ENCODE measurements at regions of chr9 and their contacts with region 1.

Region 1: DNA sequence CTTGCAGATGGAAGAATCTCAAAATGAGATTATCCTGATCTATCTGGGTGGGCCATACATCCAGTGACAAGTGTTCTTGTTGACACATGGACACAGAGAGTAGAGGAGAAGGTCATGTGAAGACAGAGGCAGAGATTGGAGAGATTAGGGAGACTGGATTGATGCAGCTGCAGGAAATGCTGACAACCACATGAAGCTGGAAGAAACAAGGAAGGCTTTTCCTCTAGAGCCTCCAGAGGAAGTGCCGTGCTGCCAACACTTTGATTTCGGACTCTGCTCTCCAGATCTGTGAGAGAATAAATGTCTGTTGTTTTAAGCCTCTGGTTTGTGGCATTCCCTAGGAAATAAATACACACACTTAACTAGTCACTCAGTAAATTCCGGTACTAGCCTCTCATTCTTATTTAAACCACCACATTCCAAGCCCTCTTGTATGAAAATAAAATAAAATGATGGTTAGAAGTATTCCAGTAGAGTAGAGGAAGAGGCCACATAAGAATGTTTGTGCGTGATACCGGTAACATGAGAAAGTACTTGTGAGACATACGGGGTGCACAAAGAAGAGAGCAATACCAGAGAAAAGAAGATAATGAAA is 110.9 kb upstream of the DMAC1 start:
- DNase-seq: no peak
- ATAC-seq: no peak
- H3K4me3 ChIP-seq: no peak overlapping the region
- H3K4me3 Mint-ChIP-seq: no peak overlapping the region
- H3K27ac ChIP-seq: no peak overlapping the region
- H3K27ac Mint-ChIP-seq: peak overlapping the region in 1 of 9 donors; percentile 9
- H3K4me1 ChIP-seq: peaks cover 0 to 4% of the 10 kb centered on the region in 2 donors
- H3K4me1 Mint-ChIP-seq: peaks cover 0 to 14% (median 10%) of the 10 kb centered on the region in 7 donors
- H3K27me3 ChIP-seq: no peaks in the 10 kb centered on the region
- H3K27me3 Mint-ChIP-seq: peaks cover 0 to 5% (median 0%) of the 10 kb centered on the region in 5 donors

Region 2: GRCh38 chr9:7844242-7844641 is 66.3 kb before region 1 on chr9:
- CTCF ChIA-PET with region 1: no interaction called
- POLR2A ChIA-PET with region 1: no interaction called
- intact Hi-C with region 1: no loop called
- DNase-seq: peak in 6 of 9 donors; percentile 2 to 44 (median 24)
- ATAC-seq: peak; percentile 73
- H3K4me3 ChIP-seq: no peak overlapping the region
- H3K4me3 Mint-ChIP-seq: peak overlapping the region in 1 of 10 donors; percentile 6
- H3K27ac ChIP-seq: no peak overlapping the region
- H3K27ac Mint-ChIP-seq: no peak overlapping the region
- H3K4me1 ChIP-seq: no peaks in the 10 kb centered on the region
- H3K4me1 Mint-ChIP-seq: peaks cover 0 to 3% (median 0%) of the 10 kb centered on the region in 7 donors
- H3K27me3 ChIP-seq: no peaks in the 10 kb centered on the region
- H3K27me3 Mint-ChIP-seq: peaks cover 0 to 4% (median 0%) of the 10 kb centered on the region in 5 donors

Region 3: GRCh38 chr9:7879551-7880245 is 30.8 kb before region 1 on chr9:
- CTCF ChIA-PET with region 1: no interaction called
- POLR2A ChIA-PET with region 1: no interaction called
- intact Hi-C with region 1: loop called in 1 of 2 experiments (anchors 5 kb)
- DNase-seq: peak in 1 of 9 donors; percentile 32
- ATAC-seq: peak; percentile 51
- H3K4me3 ChIP-seq: no peak overlapping the region
- H3K4me3 Mint-ChIP-seq: no peak overlapping the region
- H3K27ac ChIP-seq: no peak overlapping the region
- H3K27ac Mint-ChIP-seq: peak overlapping the region in 1 of 9 donors; percentile 36
- H3K4me1 ChIP-seq: no peaks in the 10 kb centered on the region
- H3K4me1 Mint-ChIP-seq: peaks cover 2 to 13% (median 4%) of the 10 kb centered on the region in 7 donors
- H3K27me3 ChIP-seq: no peaks in the 10 kb centered on the region
- H3K27me3 Mint-ChIP-seq: no peaks in the 10 kb centered on the region

Measured in naive thymus-derived CD4-positive, alpha-beta T cell (primary cell).